A549 (cell line): ENCODE measurements at regions of chr2 and their contacts with region 1.

Region 1: DNA sequence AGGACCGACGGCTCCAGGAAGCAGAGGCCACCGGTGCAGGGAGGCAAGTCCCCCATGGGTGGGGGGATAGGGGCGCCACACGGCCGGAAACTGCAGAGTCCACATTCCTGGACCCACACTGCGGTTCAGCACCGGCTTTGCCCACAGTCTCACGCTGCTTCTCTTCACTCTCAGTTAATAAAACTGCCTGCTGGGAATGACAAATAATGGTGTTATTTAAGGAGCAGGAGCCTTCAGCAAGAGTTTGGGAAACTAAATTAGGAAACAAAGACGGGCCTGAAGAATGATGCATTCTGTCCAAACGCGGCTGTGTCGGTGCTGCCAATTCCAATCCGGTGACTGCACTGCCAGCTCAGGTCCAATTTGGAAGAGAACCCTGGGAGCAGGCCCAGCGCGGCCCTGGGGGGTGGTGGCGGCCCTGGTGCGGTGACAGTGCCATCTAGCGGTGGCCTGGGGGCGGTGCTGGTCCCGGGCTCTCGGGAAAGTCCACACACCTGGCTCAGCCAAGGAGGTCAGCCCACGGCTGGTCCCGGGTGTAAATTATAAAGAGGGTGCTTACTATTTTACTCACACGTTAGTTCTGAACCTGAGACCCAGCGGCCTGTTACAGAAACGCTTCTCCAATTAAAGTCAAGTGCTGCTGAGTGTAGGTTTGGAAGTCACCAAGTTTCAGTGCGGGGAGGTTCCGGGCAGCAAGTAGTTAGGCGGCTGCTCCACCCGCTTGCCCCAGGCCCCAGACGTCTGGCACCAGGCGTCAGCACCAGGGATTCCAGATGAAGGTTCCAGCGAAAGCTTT is 73.1 kb upstream of the PXDN start:
- DNase-seq: peak; percentile 48 to 85
- ATAC-seq: peak; percentile 87 to 98
- H3K4me3 ChIP-seq: no peak overlapping the region
- H3K27ac ChIP-seq: peak overlapping the region; percentile 6 to 45; a peak in 2 of 6 replicates
- H3K4me1 ChIP-seq: peaks cover 7% of the 10 kb centered on the region; the same call in 2 of the 3 replicates
- CTCF ChIP-seq: peak; percentile 90
- EP300 ChIP-seq: no peak
- POLR2A ChIP-seq: no peak
- RAD21 ChIP-seq: peak; percentile 81 to 86

Region 2: DNA sequence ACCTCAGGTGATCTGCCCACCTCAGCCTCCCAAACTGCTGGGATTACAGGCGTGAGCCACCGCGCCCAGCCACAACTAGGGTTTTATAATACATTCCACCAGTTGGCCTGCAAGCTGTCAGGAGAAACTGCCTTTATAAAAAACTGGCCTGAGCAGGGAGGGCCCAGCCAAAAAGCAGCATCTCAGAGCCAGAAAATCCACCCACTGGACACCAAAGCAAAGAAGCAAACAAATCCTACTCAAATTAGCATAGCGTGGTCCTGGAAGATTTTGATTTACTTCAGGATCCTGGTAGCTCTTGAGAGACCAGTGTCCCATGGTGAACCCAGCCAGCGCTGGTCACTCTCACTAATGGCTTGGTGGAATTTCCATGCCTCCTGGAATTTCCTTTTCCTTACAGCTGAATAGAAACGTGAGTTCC is 13.1 kb before region 1 on chr2:
- CTCF ChIA-PET with region 1: interaction called, 14 read pairs
- POLR2A ChIA-PET with region 1: no interaction called
- DNase-seq: no peak
- ATAC-seq: no peak
- H3K4me3 ChIP-seq: no peak overlapping the region
- H3K27ac ChIP-seq: no peak overlapping the region
- H3K4me1 ChIP-seq: no peaks in the 10 kb centered on the region
- CTCF ChIP-seq: no peak
- EP300 ChIP-seq: no peak
- POLR2A ChIP-seq: no peak
- RAD21 ChIP-seq: no peak

Region 3: GRCh38 chr2:1830936-1831619 is 13.6 kb after region 1 on chr2:
- CTCF ChIA-PET with region 1: interaction called, 31 read pairs
- POLR2A ChIA-PET with region 1: no interaction called
- DNase-seq: no peak
- ATAC-seq: no peak
- H3K4me3 ChIP-seq: no peak overlapping the region
- H3K27ac ChIP-seq: no peak overlapping the region
- H3K4me1 ChIP-seq: no peaks in the 10 kb centered on the region
- CTCF ChIP-seq: no peak
- EP300 ChIP-seq: no peak
- POLR2A ChIP-seq: no peak
- RAD21 ChIP-seq: no peak

Region 4: GRCh38 chr2:1868683-1869141 is 51.3 kb after region 1 on chr2:
- CTCF ChIA-PET with region 1: no interaction called
- POLR2A ChIA-PET with region 1: no interaction called
- DNase-seq: no peak
- ATAC-seq: peak in 1 of 2 experiments; percentile 25; a peak in 2 of 6 replicates
- H3K4me3 ChIP-seq: no peak overlapping the region
- H3K27ac ChIP-seq: no peak overlapping the region
- H3K4me1 ChIP-seq: no peaks in the 10 kb centered on the region
- CTCF ChIP-seq: no peak
- EP300 ChIP-seq: no peak
- POLR2A ChIP-seq: no peak
- RAD21 ChIP-seq: no peak